Prostate gland (tissue), 2 donors: ENCODE measurements at regions of chr11 and their contacts with region 1.

Region 1: DNA sequence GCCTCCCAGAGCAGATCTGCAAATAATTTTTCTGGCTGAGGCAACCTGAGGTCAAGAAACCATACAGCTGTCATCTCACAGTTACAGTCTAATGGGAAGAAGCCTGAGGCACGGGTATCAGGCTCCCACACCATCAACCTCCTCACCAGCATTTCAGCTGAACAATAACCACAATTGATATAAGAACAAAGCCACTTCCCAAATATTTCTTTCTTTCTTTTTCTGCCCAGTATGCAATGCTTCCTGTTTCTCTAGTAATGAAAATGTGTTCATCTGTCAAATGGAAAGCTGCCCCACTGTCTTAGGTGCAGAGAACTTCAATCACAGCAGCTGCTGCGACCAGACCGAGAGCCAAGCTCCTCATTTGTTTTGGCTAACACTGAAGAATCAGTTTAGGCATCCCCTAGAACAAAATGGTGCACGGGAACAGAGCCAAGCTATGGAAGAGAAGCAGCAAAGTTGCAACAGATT is 108.4 kb downstream of the BLID start:
- DNase-seq: peak; percentile 6
- H3K4me3 ChIP-seq: no peak overlapping the region
- H3K27ac ChIP-seq: no peak overlapping the region
- H3K4me1 ChIP-seq: no peaks in the 10 kb centered on the region
- H3K27me3 ChIP-seq: no peaks in the 10 kb centered on the region
- CTCF ChIP-seq: no peak
- POLR2A ChIP-seq: no peak

Region 2: DNA sequence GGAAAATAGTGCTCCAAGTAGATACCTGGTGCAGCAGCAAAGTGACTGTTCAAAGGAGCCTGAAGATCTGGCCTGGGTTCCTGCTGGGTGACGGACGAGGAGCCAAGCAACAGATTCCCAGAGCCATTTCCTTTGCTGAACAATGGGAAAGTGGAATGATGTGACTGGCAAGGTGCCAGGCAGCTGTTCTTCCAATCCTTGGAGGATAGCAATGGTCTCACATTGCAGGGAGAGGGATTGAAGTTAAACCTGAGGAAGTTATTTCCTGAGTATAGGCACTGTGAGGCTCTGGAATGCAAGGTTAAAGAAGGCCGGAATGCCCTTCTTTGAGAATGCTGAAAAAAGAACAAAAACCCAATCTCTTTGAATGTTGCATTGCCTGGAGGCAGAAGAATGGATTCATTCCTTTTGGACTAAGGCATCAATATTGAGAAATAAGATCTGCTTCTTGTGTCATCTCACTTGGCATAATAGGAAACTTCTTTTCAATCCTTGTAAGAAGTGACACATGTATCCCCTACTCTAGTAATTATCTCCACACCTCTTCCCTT is 115.4 kb before region 1 on chr11:
- intact Hi-C with region 1: loop called (anchors 10 kb)
- DNase-seq: no peak
- H3K4me3 ChIP-seq: no peak overlapping the region
- H3K27ac ChIP-seq: no peak overlapping the region
- H3K4me1 ChIP-seq: no peaks in the 10 kb centered on the region
- H3K27me3 ChIP-seq: no peaks in the 10 kb centered on the region
- CTCF ChIP-seq: no peak
- POLR2A ChIP-seq: no peak

Region 3: DNA sequence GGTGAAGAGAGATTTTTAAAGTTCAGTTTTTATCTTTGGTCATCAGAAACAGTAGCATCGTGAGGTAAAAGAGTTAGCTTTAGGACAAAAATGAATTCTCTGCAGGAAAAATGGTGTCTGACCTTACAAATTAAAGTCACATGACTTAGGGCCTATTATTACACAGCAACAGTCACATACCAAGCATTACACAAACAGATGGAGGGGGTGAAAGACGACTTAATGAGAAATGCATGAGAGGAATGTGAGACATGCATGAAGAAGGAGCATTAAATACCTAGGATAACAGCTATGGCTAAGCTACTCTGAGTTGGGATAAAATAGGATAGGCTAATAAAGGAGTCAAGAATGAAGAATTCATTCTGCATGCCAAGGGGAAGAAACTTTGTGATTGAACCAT is 30.9 kb after region 1 on chr11:
- intact Hi-C with region 1: no loop called
- DNase-seq: no peak
- H3K4me3 ChIP-seq: no peak overlapping the region
- H3K27ac ChIP-seq: no peak overlapping the region
- H3K4me1 ChIP-seq: no peaks in the 10 kb centered on the region
- H3K27me3 ChIP-seq: no peaks in the 10 kb centered on the region
- CTCF ChIP-seq: no peak
- POLR2A ChIP-seq: no peak